H1 (cell line): ENCODE measurements at regions of chr6 and their contacts with region 1.

Region 1: DNA sequence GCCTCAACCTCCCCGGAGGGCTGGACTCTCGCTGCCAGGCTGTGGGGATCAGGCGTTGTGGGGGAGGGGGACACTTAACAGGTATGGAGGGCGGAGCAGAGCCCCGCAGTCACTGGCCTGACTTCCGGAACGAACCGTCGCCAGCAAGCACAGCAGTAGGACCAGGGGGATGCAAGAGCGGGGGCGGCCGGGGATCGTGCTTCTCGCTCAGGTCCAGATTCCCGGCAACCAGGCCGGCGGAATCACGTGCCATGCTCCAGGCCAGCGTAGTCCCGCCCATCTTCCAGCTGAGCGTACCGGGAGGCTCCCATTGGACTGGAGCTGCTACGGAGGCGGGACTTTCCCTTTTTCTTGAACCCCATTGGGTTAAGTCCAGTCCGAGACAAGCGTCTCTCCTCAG is 10.0 kb upstream of the POU5F1 start:
- DNase-seq: peak in 1 of 2 experiments; percentile 81
- H3K4me3 ChIP-seq: no peak overlapping the region
- H3K27ac ChIP-seq: no peak overlapping the region
- H3K4me1 ChIP-seq: peaks cover 0 to 9% (median 6%) of the 10 kb centered on the region in 4 experiments; a peak in 4 of 7 replicates
- H3K27me3 ChIP-seq: no peaks in the 10 kb centered on the region
- CTCF ChIP-seq: no peak
- EP300 ChIP-seq: no peak
- POLR2A ChIP-seq: no peak
- RAD21 ChIP-seq: no peak

Region 2: DNA sequence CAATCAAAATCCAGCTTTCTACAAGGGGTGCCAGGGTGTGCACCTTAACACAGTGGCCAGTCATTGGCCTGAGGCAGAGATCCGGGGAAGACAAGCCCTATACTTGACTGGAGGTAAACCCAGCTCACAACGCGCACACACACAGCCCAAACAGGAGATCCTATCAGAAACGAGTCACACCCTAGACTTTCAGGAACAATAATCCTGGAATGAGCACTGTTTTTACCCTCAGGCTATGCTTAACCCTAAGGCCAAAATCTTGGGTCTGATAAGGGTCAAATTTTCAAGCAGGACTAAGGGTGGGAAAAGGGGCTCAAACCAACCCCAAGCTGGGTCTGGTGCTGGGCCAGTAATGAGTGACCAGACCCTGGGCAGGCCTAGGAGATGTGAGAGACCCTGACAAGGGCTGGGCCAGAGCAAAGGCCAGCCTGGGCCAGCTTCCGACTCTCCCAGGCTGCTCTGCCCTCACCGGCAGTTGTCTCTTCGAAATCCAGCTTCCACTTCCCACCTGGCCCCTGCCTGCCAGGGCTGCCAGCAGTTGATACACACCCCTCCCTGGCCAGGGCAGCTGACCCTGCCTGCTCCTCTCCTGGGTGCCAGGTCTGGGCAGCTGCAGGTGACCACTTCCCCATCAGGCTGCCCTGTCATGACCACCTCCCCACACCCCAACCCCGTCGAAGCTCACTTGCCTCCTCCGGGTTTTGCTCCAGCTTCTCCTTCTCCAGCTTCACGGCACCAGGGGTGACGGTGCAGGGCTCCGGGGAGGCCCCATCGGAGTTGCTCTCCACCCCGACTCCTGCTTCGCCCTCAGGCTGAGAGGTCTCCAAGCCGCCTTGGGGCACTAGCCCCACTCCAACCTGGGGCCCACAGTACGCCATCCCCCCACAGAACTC is 10.7 kb before region 1 on chr6:
- CTCF ChIA-PET with region 1: interaction called, 12 read pairs
- POLR2A ChIA-PET with region 1: interaction called, 2,251 read pairs
- DNase-seq: peak in 1 of 2 experiments; percentile 63
- H3K4me3 ChIP-seq: peak overlapping the region; percentile 70 to 92 (median 80)
- H3K27ac ChIP-seq: peak overlapping the region; percentile 77
- H3K4me1 ChIP-seq: peaks cover 22 to 38% (median 28%) of the 10 kb centered on the region in 4 experiments
- H3K27me3 ChIP-seq: no peaks in the 10 kb centered on the region
- CTCF ChIP-seq: no peak
- EP300 ChIP-seq: no peak
- POLR2A ChIP-seq: peak in 1 of 2 experiments; percentile 14; a peak in 2 of 3 replicates
- RAD21 ChIP-seq: no peak

Region 3: DNA sequence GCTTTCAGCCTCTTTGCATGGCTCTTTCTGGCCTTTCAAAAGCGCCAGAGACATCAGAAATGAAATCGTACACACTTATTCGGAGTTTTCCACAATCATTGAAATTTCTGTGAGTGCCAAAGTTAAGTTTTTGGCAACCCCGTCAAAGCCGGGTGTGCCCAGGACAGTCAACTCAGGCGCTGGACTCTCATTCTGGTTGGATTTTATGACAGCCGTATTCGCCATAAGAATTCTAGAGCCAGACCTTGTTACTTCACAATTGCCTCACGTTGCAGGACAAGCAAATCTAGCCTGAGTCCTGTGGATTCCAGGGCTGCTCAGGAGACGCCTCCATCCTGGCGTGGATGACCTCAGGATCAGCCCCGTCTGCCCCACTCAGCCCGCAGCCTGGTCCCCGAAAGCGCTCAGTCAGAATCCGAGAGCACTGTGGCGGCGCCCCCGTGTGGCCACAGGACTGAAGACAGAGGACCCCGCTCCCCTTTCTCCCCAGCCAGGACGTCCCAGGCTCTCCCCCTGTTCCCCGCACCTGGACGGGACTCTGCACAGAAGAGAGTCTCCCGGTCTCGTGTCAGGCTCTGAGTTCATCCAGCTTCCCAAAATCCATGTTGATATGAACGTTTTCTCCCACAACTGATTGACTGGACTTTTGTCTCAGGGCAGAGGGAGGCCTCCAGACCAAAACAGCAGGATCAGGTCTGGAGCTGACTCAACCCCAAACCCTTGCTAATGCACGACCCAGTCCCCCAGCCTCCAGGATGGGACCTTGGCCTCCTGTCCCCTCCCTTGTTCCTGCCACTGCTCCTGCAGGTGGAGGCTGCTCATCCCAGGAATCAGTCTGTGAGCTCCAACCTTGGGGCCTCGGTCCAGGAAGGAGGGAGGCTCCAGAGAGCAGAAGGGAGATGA is 261.1 kb after region 1 on chr6:
- CTCF ChIA-PET with region 1: no interaction called
- POLR2A ChIA-PET with region 1: no interaction called
- DNase-seq: peak; percentile 46 to 94
- H3K4me3 ChIP-seq: no peak overlapping the region
- H3K27ac ChIP-seq: no peak overlapping the region
- H3K4me1 ChIP-seq: peaks cover 0 to 8% (median 0%) of the 10 kb centered on the region in 4 experiments; a peak in 3 of 7 replicates
- H3K27me3 ChIP-seq: peaks cover 0 to 8% (median 0%) of the 10 kb centered on the region in 4 experiments; a peak in 3 of 7 replicates
- CTCF ChIP-seq: peak; percentile 87 to 91 (median 89)
- EP300 ChIP-seq: no peak
- POLR2A ChIP-seq: no peak
- RAD21 ChIP-seq: peak; percentile 84 to 86